WTC11 (cell line): ENCODE measurements at regions of chr4 and their contacts with region 1.

Region 1: GRCh38 chr4:108570993-108571569 is 49.3 kb upstream of the RPL34 start:
- DNase-seq: no peak
- ATAC-seq: no peak
- H3K4me3 Mint-ChIP-seq: no peak overlapping the region
- H3K27ac Mint-ChIP-seq: no peak overlapping the region
- H3K4me1 Mint-ChIP-seq: peaks cover 5% of the 10 kb centered on the region; the same call in 1 of the 2 replicates
- H3K27me3 Mint-ChIP-seq: no peaks in the 10 kb centered on the region
- CTCF ChIP-seq: no peak

Region 2: GRCh38 chr4:108018040-108018883 is 552.8 kb before region 1 on chr4:
- CTCF ChIA-PET with region 1: interaction called, 13 read pairs
- POLR2A ChIA-PET with region 1: no interaction called
- DNase-seq: peak; percentile 84
- ATAC-seq: peak; percentile 91
- H3K4me3 Mint-ChIP-seq: no peak overlapping the region
- H3K27ac Mint-ChIP-seq: no peak overlapping the region
- H3K4me1 Mint-ChIP-seq: peaks cover 9% of the 10 kb centered on the region
- H3K27me3 Mint-ChIP-seq: no peaks in the 10 kb centered on the region
- CTCF ChIP-seq: peak; percentile 81

Region 3: DNA sequence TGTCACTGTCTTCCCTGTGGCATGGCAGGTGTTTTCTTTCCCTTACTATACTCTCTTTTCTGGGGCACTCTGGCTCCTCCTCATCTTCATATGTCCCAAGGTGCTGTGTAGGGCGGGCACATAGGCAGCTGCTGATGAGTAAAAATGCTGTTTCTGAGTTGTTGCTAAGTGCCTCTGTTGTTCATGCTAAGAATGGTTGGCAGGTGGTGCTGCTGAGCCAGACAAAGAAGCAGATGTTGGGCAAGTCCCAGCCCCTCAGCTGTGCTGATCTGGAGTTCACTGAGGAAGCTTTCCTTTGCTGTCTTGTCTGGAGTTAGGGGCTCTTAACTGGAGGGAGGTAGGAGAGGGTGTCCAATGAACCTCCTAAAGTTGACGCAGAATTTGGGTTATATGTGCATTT is 540.7 kb before region 1 on chr4:
- CTCF ChIA-PET with region 1: interaction called, 15 read pairs
- POLR2A ChIA-PET with region 1: no interaction called
- DNase-seq: peak; percentile 55
- ATAC-seq: peak; percentile 96
- H3K4me3 Mint-ChIP-seq: no peak overlapping the region
- H3K27ac Mint-ChIP-seq: peak overlapping the region; percentile 16; the same call in 1 of the 2 replicates
- H3K4me1 Mint-ChIP-seq: no peaks in the 10 kb centered on the region
- H3K27me3 Mint-ChIP-seq: no peaks in the 10 kb centered on the region
- CTCF ChIP-seq: 0 out of 2 replicates have a peak, but pooled peaks have one; percentile 34

Region 4: DNA sequence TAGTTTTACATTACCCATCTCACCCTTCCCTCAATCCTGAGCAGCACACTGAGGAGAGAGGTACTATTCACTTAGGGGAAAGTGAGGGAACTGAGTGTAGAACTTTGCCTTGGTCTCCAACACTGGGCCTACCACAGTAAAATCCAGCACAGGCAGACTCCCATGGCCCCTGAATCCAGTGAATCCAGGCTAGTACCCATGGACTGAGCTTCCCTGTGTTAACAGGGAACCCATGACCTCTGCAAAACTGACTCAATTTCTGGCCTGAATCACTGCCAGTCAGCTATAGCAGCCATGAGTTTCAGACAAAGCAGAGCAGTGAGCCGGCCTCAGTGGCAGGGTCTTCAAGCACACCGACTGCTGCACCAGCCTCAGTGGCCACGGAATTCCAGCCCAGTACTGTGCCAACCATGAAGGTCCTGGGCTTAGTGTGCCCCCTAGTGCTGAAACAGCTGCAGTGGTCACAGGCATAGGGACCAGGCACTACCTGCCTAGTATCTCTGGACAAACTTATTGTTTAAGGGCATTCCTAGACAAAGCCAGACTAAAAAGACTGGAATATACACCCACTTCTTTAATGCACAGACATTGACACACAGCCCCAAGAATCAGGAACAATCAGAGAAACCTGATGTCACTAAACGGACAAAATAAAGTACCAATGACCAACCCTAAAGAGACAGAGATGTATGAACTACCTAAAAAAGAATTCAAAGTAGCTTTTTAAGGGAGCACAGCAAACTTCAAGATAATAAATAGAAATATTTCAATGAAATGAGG is 78.1 kb before region 1 on chr4:
- CTCF ChIA-PET with region 1: interaction called, 12 read pairs
- POLR2A ChIA-PET with region 1: no interaction called
- DNase-seq: peak; percentile 81
- ATAC-seq: peak; percentile 100
- H3K4me3 Mint-ChIP-seq: no peak overlapping the region
- H3K27ac Mint-ChIP-seq: no peak overlapping the region
- H3K4me1 Mint-ChIP-seq: no peaks in the 10 kb centered on the region
- H3K27me3 Mint-ChIP-seq: no peaks in the 10 kb centered on the region; the same call in 1 of the 2 replicates
- CTCF ChIP-seq: peak; percentile 82

Region 5: DNA sequence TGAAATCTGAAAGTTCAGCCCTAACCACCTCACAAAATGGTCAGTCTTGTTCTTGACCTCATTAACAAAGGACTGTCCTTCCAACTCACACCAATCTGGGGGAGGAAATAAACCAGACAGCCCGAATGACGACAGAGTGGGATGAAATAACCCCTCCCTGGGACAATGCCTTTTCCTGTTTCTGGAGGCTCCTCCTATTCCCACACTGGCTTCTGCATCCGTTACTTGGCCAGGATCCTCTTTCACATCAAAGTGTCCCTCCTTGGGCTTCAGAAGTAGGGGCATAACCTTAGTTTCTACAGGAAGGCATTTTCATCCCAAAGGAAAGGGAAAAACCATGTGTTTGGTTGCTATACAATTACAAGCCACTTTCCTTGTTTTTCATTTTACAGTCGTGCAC is 10.5 kb before region 1 on chr4:
- CTCF ChIA-PET with region 1: interaction called, 12 read pairs
- POLR2A ChIA-PET with region 1: interaction called, 4 read pairs
- DNase-seq: no peak
- ATAC-seq: peak; percentile 39; the same call in 1 of the 2 replicates
- H3K4me3 Mint-ChIP-seq: no peak overlapping the region
- H3K27ac Mint-ChIP-seq: no peak overlapping the region
- H3K4me1 Mint-ChIP-seq: peaks cover 19% of the 10 kb centered on the region
- H3K27me3 Mint-ChIP-seq: no peaks in the 10 kb centered on the region
- CTCF ChIP-seq: no peak